Ascending aorta (tissue), 2 donors: ENCODE measurements at regions of chr6 and their contacts with region 1.

Region 1: GRCh38 chr6:109095027-109095834 is at the start of gene CEP57L1:
- DNase-seq: peak; percentile 88 to 98
- H3K4me3 ChIP-seq: peak within 1 kb of the TSS; percentile 64 to 69
- H3K27ac ChIP-seq: peak within 1 kb of the TSS; percentile 95 to 97
- H3K4me1 ChIP-seq: peaks cover 2 to 13% of the 10 kb centered on the region in 2 donors
- H3K27me3 ChIP-seq: no peaks in the 10 kb centered on the region
- CTCF ChIP-seq: no peak
- total RNA-seq, gene CEP57L1: 1.1 TPM

Region 2: GRCh38 chr6:107957909-107958688 is 1137.1 kb before region 1 on chr6 and contains the start of gene SEC63:
- intact Hi-C with region 1: loop called (anchors 10 kb)
- DNase-seq: peak; percentile 89 to 98
- H3K4me3 ChIP-seq: peak within 1 kb of the TSS; percentile 78 to 87
- H3K27ac ChIP-seq: peak within 1 kb of the TSS; percentile 72 to 83
- H3K4me1 ChIP-seq: peaks cover 0 to 21% of the 10 kb centered on the region in 2 donors
- H3K27me3 ChIP-seq: no peaks in the 10 kb centered on the region
- CTCF ChIP-seq: no peak
- total RNA-seq, gene SEC63: 13.1 TPM

Region 3: GRCh38 chr6:109009236-109009961 is 85.8 kb before region 1 on chr6:
- intact Hi-C with region 1: loop called (anchors 1 kb)
- DNase-seq: peak; percentile 62 to 96
- H3K4me3 ChIP-seq: peak overlapping the region; percentile 69 to 99
- H3K27ac ChIP-seq: peak overlapping the region; percentile 77 to 94
- H3K4me1 ChIP-seq: peaks cover 0 to 11% of the 10 kb centered on the region in 2 donors
- H3K27me3 ChIP-seq: no peaks in the 10 kb centered on the region
- CTCF ChIP-seq: peak in 2 of 3 experiments; percentile 5 to 54

Region 4: GRCh38 chr6:109153752-109154151 is 58.5 kb after region 1 on chr6:
- intact Hi-C with region 1: no loop called
- DNase-seq: no peak
- H3K4me3 ChIP-seq: no peak overlapping the region
- H3K27ac ChIP-seq: no peak overlapping the region
- H3K4me1 ChIP-seq: no peaks in the 10 kb centered on the region
- H3K27me3 ChIP-seq: no peaks in the 10 kb centered on the region
- CTCF ChIP-seq: no peak

Region 5: GRCh38 chr6:109174911-109175310 is 79.7 kb after region 1 on chr6:
- intact Hi-C with region 1: no loop called
- DNase-seq: no peak
- H3K4me3 ChIP-seq: no peak overlapping the region
- H3K27ac ChIP-seq: no peak overlapping the region
- H3K4me1 ChIP-seq: no peaks in the 10 kb centered on the region
- H3K27me3 ChIP-seq: no peaks in the 10 kb centered on the region
- CTCF ChIP-seq: no peak

Region 6: DNA sequence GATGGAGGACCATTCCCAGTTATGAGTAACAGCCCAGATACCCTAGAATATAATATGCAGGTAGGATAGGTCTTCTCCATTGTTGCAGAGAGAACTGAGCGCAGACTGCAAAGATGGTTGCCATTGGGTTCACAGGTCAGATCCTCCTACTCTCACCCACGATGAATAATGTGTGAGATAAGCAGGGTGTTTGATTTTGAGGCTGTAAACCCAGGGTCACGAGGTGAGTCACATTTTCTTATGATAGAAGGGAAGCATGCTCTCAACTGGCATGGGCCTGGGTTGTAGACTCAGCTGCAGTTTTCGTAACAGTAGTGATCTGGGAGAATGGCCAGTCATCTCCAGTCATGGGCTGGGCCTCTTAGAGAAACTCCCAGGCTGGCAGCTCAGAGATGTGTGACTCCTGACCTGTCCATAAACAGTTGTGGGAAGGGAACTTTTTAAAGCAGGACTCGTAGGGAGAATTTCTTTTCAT is 212.8 kb after region 1 on chr6:
- intact Hi-C with region 1: loop called (anchors 10 kb)
- DNase-seq: peak; percentile 80 to 92
- H3K4me3 ChIP-seq: no peak overlapping the region
- H3K27ac ChIP-seq: peak overlapping the region; percentile 16 to 73
- H3K4me1 ChIP-seq: peaks cover 0 to 16% of the 10 kb centered on the region in 2 donors
- H3K27me3 ChIP-seq: no peaks in the 10 kb centered on the region
- CTCF ChIP-seq: no peak

Region 7: DNA sequence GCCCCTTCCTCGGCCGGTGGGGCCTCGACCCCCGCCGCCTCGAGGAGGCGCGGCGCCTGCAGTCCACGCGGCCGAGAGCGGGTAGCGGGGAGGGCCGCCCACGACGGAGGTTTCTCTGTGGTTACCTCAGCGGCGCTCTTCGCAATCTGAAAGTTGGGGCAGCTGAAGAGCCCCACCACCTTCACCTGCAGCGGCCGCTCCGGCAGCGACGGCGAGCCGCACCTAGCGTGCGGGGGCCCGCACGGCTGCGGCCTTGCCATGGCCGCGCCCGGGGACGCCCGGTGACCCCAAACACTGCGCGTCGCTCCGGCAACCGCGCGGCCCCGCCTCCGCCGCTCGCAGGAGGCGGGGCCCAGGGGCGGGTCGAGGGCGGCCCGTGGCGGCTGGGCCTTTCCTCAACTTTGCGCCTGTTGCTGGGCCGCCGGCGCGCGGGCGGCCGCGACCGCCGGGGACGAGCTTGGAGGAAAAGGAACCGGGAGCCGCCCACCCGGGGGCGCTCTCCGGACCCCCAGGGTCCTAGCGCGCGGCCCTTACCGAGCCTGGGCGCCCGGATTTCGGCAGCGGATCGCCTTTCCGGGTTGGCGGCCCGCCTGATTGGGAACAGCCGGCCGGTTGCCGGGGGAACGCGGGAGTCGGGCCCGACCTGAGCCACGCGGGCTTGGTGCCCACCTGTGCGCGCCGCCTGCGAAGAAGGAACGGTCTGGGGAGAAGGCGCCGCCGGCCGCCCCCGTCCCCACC is 345.3 kb after region 1 on chr6 and contains the starts of genes PPIL6 and SMPD2:
- intact Hi-C with region 1: loop called (anchors 2 kb)
- DNase-seq: peak in 1 of 2 donors; percentile 93
- H3K4me3 ChIP-seq: peak within 1 kb of the TSS; percentile 70 to 84
- H3K27ac ChIP-seq: peak within 1 kb of the TSS; percentile 77 to 81
- H3K4me1 ChIP-seq: peaks cover 0 to 10% of the 10 kb centered on the region in 2 donors
- H3K27me3 ChIP-seq: no peaks in the 10 kb centered on the region
- CTCF ChIP-seq: peak; percentile 25 to 39 (median 32)
- total RNA-seq, gene PPIL6: 0.11 TPM
- total RNA-seq, gene SMPD2: 14.2 TPM

Region 8: DNA sequence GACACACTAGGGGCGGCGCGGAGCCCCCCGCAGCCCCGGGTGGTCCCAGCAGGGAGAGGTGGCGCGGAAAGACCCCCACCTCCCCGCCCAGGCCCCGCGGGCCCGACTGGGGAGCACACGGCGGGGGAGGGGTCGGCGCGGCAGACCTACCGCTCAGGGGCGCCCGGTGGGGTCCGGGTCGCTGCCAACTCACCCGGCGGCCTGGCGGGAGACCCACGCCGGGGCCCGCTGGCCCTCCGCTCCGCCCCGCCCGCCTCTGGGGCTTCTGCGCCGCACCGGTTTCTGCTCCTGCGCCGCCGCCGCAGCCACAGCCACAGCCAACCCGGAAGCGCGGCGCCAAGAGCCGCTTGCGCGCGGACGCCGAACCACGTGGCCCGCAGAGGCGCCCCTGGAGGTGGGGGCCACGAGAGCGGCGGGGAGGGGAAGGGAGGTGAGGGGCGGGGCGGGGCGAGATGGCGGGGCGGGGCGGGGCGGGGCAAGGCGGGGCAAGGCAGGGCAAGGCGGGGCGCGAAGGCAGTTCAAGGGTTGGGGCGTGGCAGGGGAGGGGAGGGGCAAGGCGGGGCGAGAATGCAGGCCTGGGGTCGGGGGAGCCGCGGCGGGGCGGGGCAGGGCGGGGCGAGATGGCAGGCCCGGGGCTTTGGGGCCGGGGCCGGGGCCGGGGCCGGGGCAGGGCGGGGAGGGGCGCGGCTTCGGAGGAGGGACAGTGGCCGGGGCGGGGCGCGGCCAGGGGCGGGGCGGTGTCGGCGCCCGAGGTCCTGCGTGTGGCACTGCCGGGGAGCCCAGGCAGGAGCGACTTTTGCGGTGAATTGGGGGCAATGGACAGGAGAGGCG is 387.9 kb after region 1 on chr6 and contains the start of gene ZBTB24:
- intact Hi-C with region 1: loop called (anchors 5 kb)
- DNase-seq: peak; percentile 61 to 94
- H3K4me3 ChIP-seq: peak within 1 kb of the TSS; percentile 88 to 99
- H3K27ac ChIP-seq: peak within 1 kb of the TSS; percentile 78 to 81
- H3K4me1 ChIP-seq: peaks cover 8 to 31% of the 10 kb centered on the region in 2 donors
- H3K27me3 ChIP-seq: no peaks in the 10 kb centered on the region
- CTCF ChIP-seq: peak in 1 of 3 experiments; percentile 14
- total RNA-seq, gene ZBTB24: 10.2 TPM

Region 9: GRCh38 chr6:110815217-110816109 is 1720.2 kb after region 1 on chr6 and contains the start of gene CDK19:
- intact Hi-C with region 1: loop called (anchors 10 kb)
- DNase-seq: peak; percentile 96 to 99
- H3K4me3 ChIP-seq: peak within 1 kb of the TSS; percentile 97
- H3K27ac ChIP-seq: peak within 1 kb of the TSS; percentile 93 to 98
- H3K4me1 ChIP-seq: peaks cover 3 to 6% of the 10 kb centered on the region in 2 donors
- H3K27me3 ChIP-seq: no peaks in the 10 kb centered on the region
- CTCF ChIP-seq: no peak
- total RNA-seq, gene CDK19: 5.2 TPM